ENCODE measurements at regions of chr20 and their contacts with region 1.

Region 1: GRCh38 chr20:45436732-45437391 is 20.9 kb downstream of the PIGT start:
- DNase-seq: peak; percentile 80 to 84 (median 81)
- H3K4me3 ChIP-seq: peak overlapping the region; percentile 59 to 60
- H3K4me3 Mint-ChIP-seq: peak overlapping the region; percentile 80 to 88 (median 84)
- H3K27ac ChIP-seq: peak overlapping the region; percentile 32
- H3K27ac Mint-ChIP-seq: peak overlapping the region; percentile 37 to 88 (median 64)
- H3K4me1 ChIP-seq: peaks cover 15% of the 10 kb centered on the region
- H3K4me1 Mint-ChIP-seq: peaks cover 5 to 18% (median 6%) of the 10 kb centered on the region in 4 donors
- H3K27me3 ChIP-seq: no peaks in the 10 kb centered on the region
- H3K27me3 Mint-ChIP-seq: no peaks in the 10 kb centered on the region

Region 2: DNA sequence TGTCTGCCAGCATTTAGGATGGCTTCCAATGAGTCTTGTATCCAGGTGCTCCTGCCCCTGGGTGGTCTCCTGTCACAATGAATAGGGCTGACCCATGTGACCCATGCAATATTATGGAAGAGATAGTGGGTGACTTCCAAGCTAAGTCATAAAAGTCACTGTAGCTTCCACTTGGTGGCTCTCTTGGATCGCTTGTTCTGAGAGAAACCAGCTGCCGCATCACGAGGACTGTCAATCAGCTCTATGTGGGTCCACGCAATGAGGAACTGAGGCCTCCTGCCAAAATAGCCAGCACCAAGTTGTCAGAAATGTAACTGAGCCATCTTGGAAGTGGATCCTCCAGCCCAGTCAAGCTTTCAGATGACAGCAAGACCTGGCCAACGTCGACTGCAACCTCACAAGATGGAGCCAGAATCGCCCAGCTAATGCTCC is 113.9 kb before region 1 on chr20:
- CTCF ChIA-PET with region 1: interaction called, 126 read pairs
- POLR2A ChIA-PET with region 1: interaction called, 12 read pairs
- intact Hi-C with region 1: loop called (anchors 1 kb)
- DNase-seq: no peak
- H3K4me3 ChIP-seq: no peak overlapping the region
- H3K4me3 Mint-ChIP-seq: no peak overlapping the region
- H3K27ac ChIP-seq: no peak overlapping the region
- H3K27ac Mint-ChIP-seq: no peak overlapping the region
- H3K4me1 ChIP-seq: peaks cover 29% of the 10 kb centered on the region
- H3K4me1 Mint-ChIP-seq: peaks cover 13 to 32% (median 22%) of the 10 kb centered on the region in 4 donors
- H3K27me3 ChIP-seq: no peaks in the 10 kb centered on the region
- H3K27me3 Mint-ChIP-seq: no peaks in the 10 kb centered on the region

Region 3: DNA sequence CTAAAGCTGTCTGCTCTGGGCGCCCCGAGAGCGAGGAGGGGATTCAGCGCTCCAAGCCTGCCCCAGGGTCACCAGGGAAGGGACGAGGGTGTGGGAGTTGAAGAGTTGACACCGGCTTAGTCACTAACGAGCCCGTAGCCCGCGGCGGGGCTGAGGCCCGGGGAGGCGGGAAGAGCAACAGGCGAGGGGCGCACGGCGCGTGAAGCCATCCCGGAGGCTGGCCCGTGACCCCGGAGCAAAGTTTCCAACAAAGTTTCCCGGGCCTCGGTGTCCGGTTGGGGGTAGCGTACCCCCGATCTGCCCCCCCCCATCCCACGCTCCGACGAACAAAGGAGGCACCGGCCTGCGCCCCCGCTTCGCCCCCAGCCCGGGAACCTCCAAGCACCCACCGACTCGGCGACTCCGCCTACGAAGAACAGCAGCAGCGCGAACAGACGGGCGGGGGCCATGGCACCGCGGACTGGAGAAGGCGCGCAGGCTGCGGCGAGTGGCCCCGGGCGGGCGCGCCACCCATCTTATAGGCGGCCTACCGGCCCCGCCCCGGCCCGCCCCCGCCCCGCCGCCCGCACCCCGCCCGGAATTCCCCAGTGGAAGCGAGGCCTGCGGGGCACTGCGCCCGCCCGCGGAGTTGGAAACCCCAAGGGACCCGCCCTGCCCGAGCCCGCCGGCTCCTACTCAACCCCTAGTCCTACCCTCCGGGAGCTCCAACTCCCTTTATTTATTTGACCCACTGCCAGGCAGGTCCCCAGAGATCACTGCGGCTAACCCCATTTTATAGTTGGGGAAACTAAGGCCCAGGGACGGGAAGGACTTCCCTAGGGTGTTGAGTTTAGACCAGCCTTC is 88.7 kb before region 1 on chr20 and contains the start of gene SDC4:
- CTCF ChIA-PET with region 1: interaction called, 13 read pairs
- POLR2A ChIA-PET with region 1: no interaction called
- intact Hi-C with region 1: no loop called
- DNase-seq: peak; percentile 50 to 65 (median 55)
- H3K4me3 ChIP-seq: peak within 1 kb of the TSS; percentile 42 to 72
- H3K4me3 Mint-ChIP-seq: peak within 1 kb of the TSS; percentile 75 to 94 (median 84)
- H3K27ac ChIP-seq: peak within 1 kb of the TSS; percentile 58
- H3K27ac Mint-ChIP-seq: peak within 1 kb of the TSS in 6 of 7 donors; percentile 35 to 78 (median 55)
- H3K4me1 ChIP-seq: peaks cover 29% of the 10 kb centered on the region
- H3K4me1 Mint-ChIP-seq: peaks cover 3 to 37% (median 17%) of the 10 kb centered on the region in 4 donors
- H3K27me3 ChIP-seq: no peaks in the 10 kb centered on the region
- H3K27me3 Mint-ChIP-seq: no peaks in the 10 kb centered on the region
- total RNA-seq, gene SDC4: 3.8 to 3.9 TPM

Region 4: DNA sequence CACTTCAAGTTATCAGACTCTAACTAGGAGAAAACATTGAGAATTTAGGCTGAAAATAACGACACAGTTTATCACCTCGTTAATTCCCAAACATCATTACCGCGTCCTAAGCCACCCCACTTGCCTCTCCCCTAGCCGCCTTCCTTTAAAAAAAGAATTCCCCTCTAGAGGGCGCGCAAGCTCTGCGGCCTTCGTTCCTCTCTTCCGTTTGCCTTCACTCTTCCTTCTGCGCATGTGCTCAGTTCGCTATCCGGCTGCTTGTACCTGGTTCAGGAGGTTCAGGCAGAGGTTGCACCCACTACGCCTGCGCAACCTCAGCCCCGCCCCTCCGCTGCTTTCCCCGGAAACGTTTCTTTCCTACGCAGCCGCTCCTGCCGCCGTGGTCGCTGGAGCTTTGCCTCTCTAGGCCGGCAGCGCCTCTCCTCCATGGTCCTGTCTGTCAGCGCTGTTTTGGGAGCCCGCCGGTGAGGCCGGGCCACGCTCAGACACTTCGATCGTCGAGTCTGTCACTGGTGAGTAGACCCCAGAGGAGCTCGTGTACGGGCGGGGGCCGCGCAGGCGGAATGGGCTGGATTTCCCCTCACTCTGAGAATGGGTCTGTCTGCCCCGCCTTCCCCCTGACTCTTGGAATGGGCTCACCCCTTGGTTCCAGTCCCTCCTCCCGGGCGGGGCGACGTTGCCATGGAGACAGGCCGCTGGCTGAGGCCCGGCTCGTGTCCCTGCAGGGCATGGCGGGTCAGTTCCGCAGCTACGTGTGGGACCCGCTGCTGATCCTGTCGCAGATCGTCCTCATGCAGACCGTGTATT is 73.9 kb before region 1 on chr20 and contains the start of gene SYS1:
- CTCF ChIA-PET with region 1: interaction called, 543 read pairs
- POLR2A ChIA-PET with region 1: interaction called, 113 read pairs
- intact Hi-C with region 1: loop called (anchors 1 kb)
- DNase-seq: peak; percentile 98 to 99 (median 99)
- H3K4me3 ChIP-seq: peak within 1 kb of the TSS; percentile 67 to 83
- H3K4me3 Mint-ChIP-seq: peak within 1 kb of the TSS; percentile 95 to 99 (median 98)
- H3K27ac ChIP-seq: peak within 1 kb of the TSS; percentile 97
- H3K27ac Mint-ChIP-seq: peak within 1 kb of the TSS; percentile 98 to 100 (median 100)
- H3K4me1 ChIP-seq: peaks cover 41% of the 10 kb centered on the region
- H3K4me1 Mint-ChIP-seq: peaks cover 28 to 59% (median 52%) of the 10 kb centered on the region in 4 donors
- H3K27me3 ChIP-seq: no peaks in the 10 kb centered on the region
- H3K27me3 Mint-ChIP-seq: no peaks in the 10 kb centered on the region
- total RNA-seq, gene SYS1: 56.4 to 56.6 TPM

Region 5: DNA sequence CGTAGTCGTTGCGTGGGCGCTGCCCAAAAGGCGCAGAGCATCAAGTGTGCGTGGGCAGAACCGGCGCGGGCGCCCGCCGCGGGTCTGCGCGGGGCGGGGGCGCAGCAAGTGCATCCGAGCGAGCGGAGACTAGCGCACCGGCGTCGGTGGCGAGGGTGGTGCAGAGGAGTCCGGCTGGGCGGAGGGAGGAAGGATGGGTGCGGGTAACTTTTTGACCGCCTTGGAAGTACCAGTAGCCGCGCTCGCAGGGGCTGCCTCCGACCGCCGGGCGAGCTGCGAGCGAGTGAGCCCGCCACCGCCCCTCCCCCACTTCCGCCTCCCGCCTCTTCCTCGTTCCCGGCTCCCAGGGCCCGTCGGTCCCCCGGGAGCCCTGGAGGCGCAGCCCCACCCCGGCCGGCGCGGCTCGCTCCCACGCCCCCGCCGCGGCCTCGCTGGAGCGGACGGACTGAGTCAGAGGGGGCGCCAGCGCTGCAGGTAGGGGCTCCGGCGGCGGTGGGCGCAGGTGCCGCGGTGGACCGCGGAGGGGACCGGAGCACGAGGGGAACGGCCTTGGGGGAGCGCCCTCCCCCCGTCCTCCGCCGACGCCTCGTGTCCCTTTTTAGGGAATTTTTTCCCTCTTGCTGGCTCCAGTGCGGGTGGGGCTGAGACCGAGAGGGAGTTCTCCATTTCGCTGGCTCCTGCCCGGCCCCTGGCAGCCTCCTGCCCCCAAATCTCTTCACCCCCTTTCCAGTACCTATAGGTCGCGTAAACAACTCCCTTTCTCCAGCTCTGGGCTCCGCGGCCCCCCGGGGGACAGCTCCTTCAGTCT is 30.4 kb before region 1 on chr20:
- CTCF ChIA-PET with region 1: interaction called, 11 read pairs
- POLR2A ChIA-PET with region 1: interaction called, 3 read pairs
- intact Hi-C with region 1: no loop called
- DNase-seq: peak; percentile 32 to 47 (median 37)
- H3K4me3 ChIP-seq: peak overlapping the region; percentile 49 to 79
- H3K4me3 Mint-ChIP-seq: peak overlapping the region; percentile 80 to 90 (median 84)
- H3K27ac ChIP-seq: peak overlapping the region; percentile 58
- H3K27ac Mint-ChIP-seq: peak overlapping the region; percentile 19 to 91 (median 87)
- H3K4me1 ChIP-seq: peaks cover 19% of the 10 kb centered on the region
- H3K4me1 Mint-ChIP-seq: peaks cover 12 to 20% (median 15%) of the 10 kb centered on the region in 4 donors
- H3K27me3 ChIP-seq: no peaks in the 10 kb centered on the region
- H3K27me3 Mint-ChIP-seq: no peaks in the 10 kb centered on the region

Region 6: DNA sequence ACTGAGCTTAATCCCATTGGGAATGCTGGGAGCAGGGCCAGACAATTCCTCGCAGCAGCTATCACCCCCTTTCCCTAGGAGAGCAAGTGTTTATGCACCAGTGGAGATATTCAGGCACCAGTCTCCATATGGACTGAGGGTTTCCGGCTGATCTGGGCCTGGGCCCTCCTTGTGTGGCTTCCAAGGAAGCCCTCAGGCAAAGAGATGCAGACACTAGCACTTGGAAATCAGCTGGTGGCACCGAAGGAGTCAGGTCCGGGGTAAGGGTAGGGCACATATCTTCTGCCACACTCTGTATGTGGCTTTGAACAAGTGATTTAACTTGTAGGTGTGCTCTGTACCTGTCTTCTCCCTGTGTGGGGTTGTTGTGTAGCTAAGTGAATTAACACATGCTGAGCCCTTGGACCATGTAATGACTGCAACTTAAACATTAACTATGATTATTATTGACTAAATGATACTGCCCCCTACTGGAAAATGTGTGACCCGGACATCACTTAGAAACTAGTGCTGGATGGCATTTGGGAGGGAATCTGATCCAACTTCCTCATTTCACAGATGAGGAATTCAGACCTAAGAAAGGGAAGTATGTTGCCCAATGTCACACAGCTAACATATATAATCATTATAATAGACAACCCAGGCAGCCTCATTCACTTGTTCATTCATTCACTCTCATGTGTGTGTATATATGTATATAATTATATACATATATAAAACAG is 13.4 kb after region 1 on chr20:
- CTCF ChIA-PET with region 1: interaction called, 83 read pairs
- POLR2A ChIA-PET with region 1: interaction called, 5 read pairs
- intact Hi-C with region 1: loop called (anchors 1 kb)
- DNase-seq: peak in 4 of 5 donors; percentile 36 to 47 (median 46)
- H3K4me3 ChIP-seq: no peak overlapping the region
- H3K4me3 Mint-ChIP-seq: no peak overlapping the region
- H3K27ac ChIP-seq: no peak overlapping the region
- H3K27ac Mint-ChIP-seq: no peak overlapping the region
- H3K4me1 ChIP-seq: no peaks in the 10 kb centered on the region
- H3K4me1 Mint-ChIP-seq: peaks cover 6 to 11% (median 8%) of the 10 kb centered on the region in 4 donors
- H3K27me3 ChIP-seq: no peaks in the 10 kb centered on the region
- H3K27me3 Mint-ChIP-seq: peaks cover 4 to 8% of the 10 kb centered on the region in 2 donors